IMR-90 (cell line): ENCODE measurements at regions of chr5 and their contacts with region 1.

Region 1: GRCh38 chr5:140287801-140288521 is 14.9 kb downstream of the PFDN1 start:
- DNase-seq: no peak
- ATAC-seq: no peak
- H3K4me3 ChIP-seq: no peak overlapping the region
- H3K27ac ChIP-seq: no peak overlapping the region
- H3K4me1 ChIP-seq: peaks cover 8% of the 10 kb centered on the region
- H3K27me3 ChIP-seq: no peaks in the 10 kb centered on the region
- CTCF ChIP-seq: no peak
- POLR2A ChIP-seq: no peak
- RAD21 ChIP-seq: no peak

Region 2: GRCh38 chr5:139696894-139697658 is 590.9 kb before region 1 on chr5:
- CTCF ChIA-PET with region 1: no interaction called
- POLR2A ChIA-PET with region 1: no interaction called
- dilution Hi-C with region 1: no loop called
- in situ Hi-C with region 1: no loop called
- intact Hi-C with region 1: no loop called
- DNase-seq: peak; percentile 91
- ATAC-seq: peak; percentile 68
- H3K4me3 ChIP-seq: peak overlapping the region; percentile 11
- H3K27ac ChIP-seq: peak overlapping the region; percentile 90
- H3K4me1 ChIP-seq: peaks cover 39% of the 10 kb centered on the region
- H3K27me3 ChIP-seq: no peaks in the 10 kb centered on the region
- CTCF ChIP-seq: no peak
- POLR2A ChIP-seq: peak; percentile 56
- RAD21 ChIP-seq: no peak; the same call in 1 of the 2 replicates

Region 3: DNA sequence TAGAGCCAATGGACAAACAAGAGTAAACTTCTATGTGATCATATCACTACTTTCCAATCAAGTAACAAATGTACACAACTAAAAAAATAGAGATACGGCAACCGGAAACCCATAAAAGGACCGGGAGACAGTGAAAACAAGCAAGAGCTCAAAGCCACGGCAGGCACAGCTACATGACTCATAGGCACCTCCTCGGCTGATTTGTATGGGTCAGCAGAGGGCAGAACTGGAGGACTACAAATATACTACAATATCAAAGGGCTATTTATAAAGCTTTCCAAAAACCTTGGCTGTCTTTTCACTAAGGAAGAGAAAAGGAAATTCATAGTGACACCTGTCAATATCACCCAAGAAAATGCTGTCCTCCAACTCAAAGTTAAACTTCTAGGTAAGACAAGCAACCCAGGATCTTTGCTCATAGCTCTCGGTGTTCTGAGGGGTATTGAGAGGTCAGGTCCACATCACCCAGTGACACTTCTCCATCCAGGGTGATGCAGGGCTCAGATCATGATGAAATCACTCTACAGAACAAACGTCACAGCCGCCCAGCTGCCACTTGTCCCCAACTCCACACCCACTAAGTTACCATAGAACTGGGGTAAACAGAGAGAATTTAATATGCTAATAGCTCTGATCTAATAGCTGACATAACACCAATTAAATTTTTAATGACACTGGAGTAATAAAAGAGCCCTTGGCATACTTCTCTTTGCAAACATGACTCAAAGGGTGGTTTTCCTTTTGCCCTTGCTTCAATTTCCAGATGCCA is 26.4 kb before region 1 on chr5:
- CTCF ChIA-PET with region 1: no interaction called
- POLR2A ChIA-PET with region 1: no interaction called
- dilution Hi-C with region 1: no loop called
- in situ Hi-C with region 1: no loop called
- intact Hi-C with region 1: loop called (anchors 2 kb)
- DNase-seq: peak; percentile 92
- ATAC-seq: peak; percentile 99
- H3K4me3 ChIP-seq: no peak overlapping the region
- H3K27ac ChIP-seq: 0 out of 2 replicates have a peak overlapping the region, but pooled peaks have one; percentile 7
- H3K4me1 ChIP-seq: peaks cover 11% of the 10 kb centered on the region
- H3K27me3 ChIP-seq: no peaks in the 10 kb centered on the region
- CTCF ChIP-seq: no peak
- POLR2A ChIP-seq: no peak
- RAD21 ChIP-seq: peak; percentile 37